MCF 10A (cell line): ENCODE measurements at regions of chr11 and their contacts with region 1.

Region 1: GRCh38 chr11:99015634-99016454 is 4.9 kb upstream of the CNTN5 start:
- DNase-seq: peak; percentile 49
- H3K4me3 Mint-ChIP-seq: no peak overlapping the region
- H3K27ac Mint-ChIP-seq: no peak overlapping the region
- H3K4me1 Mint-ChIP-seq: peaks cover 5% of the 10 kb centered on the region
- H3K27me3 Mint-ChIP-seq: peaks cover 59% of the 10 kb centered on the region
- CTCF ChIP-seq: peak; percentile 72

Region 2: DNA sequence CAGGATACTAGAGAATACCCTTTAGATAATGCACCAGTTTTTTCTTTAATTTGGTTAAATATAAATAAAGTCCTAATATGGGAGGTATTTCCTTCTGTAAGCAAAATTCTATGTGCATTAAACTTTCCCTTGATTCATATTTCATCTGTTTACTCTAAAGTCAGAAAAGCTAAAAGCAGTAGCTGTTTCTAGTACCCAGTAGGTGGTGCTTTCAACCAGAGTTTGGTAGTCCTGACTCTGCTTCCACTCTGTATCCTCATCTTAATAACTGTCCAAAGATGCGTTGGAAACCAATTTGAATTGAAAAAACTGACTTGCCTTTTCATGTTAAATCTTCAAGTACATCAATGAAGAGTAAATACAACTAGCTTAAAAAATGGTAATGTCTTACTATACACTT is 1560.9 kb before region 1 on chr11:
- CTCF ChIA-PET with region 1: interaction called, 9 read pairs
- POLR2A ChIA-PET with region 1: no interaction called
- intact Hi-C with region 1: loop called (anchors 10 kb)
- DNase-seq: peak; percentile 18
- H3K4me3 Mint-ChIP-seq: no peak overlapping the region
- H3K27ac Mint-ChIP-seq: no peak overlapping the region
- H3K4me1 Mint-ChIP-seq: no peaks in the 10 kb centered on the region
- H3K27me3 Mint-ChIP-seq: peaks cover 49% of the 10 kb centered on the region
- CTCF ChIP-seq: peak; percentile 18

Region 3: DNA sequence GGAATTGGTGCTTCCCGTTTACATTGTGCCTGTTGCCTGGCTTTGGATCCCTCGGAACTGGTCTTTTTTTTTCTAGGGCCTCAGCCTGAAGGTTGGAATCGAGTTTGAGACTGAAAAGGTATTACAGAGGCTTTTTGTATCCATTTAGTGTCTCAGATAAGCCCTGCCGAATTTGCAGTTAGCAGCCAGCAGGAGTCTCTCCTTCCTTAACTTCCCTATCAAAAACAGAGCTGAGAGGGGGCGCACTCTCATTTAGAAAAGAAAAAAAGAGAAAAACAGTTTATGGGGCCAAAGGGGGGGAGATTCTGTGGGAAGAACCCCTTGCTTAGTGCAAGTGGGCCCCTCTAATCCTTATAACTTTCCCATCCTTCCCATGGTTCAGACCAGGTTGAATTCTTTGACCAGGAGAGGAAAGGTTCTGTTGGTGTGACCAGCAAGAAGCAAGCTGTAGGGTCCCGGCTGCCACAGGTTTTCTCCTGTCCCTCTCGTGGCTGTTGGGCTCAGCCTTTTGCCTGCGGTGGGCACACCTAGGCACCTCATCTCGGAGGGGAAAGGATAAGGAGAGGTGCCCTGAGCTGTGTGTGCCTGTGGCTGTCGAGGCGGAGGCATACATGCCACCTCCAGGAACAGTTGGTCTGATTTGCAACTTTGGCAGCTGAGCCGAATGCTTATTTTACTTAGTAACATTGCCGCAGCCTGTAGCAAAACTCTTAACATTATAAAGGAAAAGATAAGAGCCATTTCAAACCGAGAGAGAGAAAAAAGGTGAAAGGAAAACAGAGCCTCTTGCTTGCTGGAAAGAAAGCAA is 560.1 kb before region 1 on chr11:
- CTCF ChIA-PET with region 1: no interaction called
- POLR2A ChIA-PET with region 1: no interaction called
- intact Hi-C with region 1: loop called (anchors 5 kb)
- DNase-seq: peak; percentile 5
- H3K4me3 Mint-ChIP-seq: no peak overlapping the region
- H3K27ac Mint-ChIP-seq: no peak overlapping the region
- H3K4me1 Mint-ChIP-seq: no peaks in the 10 kb centered on the region
- H3K27me3 Mint-ChIP-seq: peaks cover 38% of the 10 kb centered on the region
- CTCF ChIP-seq: no peak

Region 4: GRCh38 chr11:99739464-99740089 is 723.7 kb after region 1 on chr11:
- CTCF ChIA-PET with region 1: interaction called, 10 read pairs
- POLR2A ChIA-PET with region 1: no interaction called
- intact Hi-C with region 1: loop called (anchors 5 kb)
- DNase-seq: peak; percentile 47
- H3K4me3 Mint-ChIP-seq: no peak overlapping the region
- H3K27ac Mint-ChIP-seq: no peak overlapping the region
- H3K4me1 Mint-ChIP-seq: no peaks in the 10 kb centered on the region
- H3K27me3 Mint-ChIP-seq: peaks cover 76% of the 10 kb centered on the region
- CTCF ChIP-seq: peak; percentile 55